H1 (cell line): ENCODE measurements at regions of chr3 and their contacts with region 1.

Region 1: GRCh38 chr3:172461530-172462138 is 13.4 kb upstream of the GHSR start:
- DNase-seq: no peak
- H3K4me3 ChIP-seq: no peak overlapping the region
- H3K27ac ChIP-seq: no peak overlapping the region
- H3K4me1 ChIP-seq: no peaks in the 10 kb centered on the region
- H3K27me3 ChIP-seq: no peaks in the 10 kb centered on the region
- CTCF ChIP-seq: peak in 2 of 3 experiments; percentile 50 to 80; a peak in 2 of 4 replicates
- EP300 ChIP-seq: no peak
- POLR2A ChIP-seq: no peak
- RAD21 ChIP-seq: peak; percentile 48 to 51

Region 2: GRCh38 chr3:172449466-172450149 is 12.0 kb before region 1 on chr3:
- CTCF ChIA-PET with region 1: interaction called, 18 read pairs
- POLR2A ChIA-PET with region 1: interaction called, 3 read pairs
- DNase-seq: peak in 1 of 2 experiments; percentile 84
- H3K4me3 ChIP-seq: peak overlapping the region; percentile 4 to 56 (median 19); a peak in 6 of 8 replicates
- H3K27ac ChIP-seq: no peak overlapping the region
- H3K4me1 ChIP-seq: peaks cover 0 to 23% (median 9%) of the 10 kb centered on the region in 4 experiments; a peak in 5 of 7 replicates
- H3K27me3 ChIP-seq: peaks cover 28 to 54% (median 41%) of the 10 kb centered on the region in 4 experiments
- CTCF ChIP-seq: peak; percentile 7 to 20 (median 10); a peak in 3 of 4 replicates
- EP300 ChIP-seq: no peak
- POLR2A ChIP-seq: no peak
- RAD21 ChIP-seq: 0 out of 4 replicates have a peak, but pooled peaks have one; percentile 4 to 15

Region 3: DNA sequence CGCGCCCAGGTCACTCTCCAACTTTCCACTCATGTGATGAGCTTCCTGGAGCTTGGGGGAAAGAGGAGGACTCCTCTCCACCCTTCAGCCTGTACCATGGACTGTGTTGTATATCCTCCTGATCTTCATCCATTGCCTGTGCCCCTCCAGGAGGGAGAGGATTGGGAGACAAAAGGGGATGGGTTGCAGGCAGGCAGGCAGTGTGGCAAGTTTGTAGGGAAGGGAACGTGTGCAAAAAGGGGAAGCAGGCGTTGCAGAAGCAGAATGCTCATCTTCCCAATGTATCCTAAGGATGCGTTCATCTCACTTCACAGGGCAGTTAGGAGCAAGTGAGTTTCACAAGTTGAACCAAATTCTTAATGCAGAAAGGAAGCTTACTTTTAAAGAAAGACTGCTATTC is 14.7 kb after region 1 on chr3:
- CTCF ChIA-PET with region 1: interaction called, 11 read pairs
- POLR2A ChIA-PET with region 1: no interaction called
- DNase-seq: no peak
- H3K4me3 ChIP-seq: no peak overlapping the region
- H3K27ac ChIP-seq: no peak overlapping the region
- H3K4me1 ChIP-seq: no peaks in the 10 kb centered on the region
- H3K27me3 ChIP-seq: no peaks in the 10 kb centered on the region
- CTCF ChIP-seq: no peak
- EP300 ChIP-seq: no peak
- POLR2A ChIP-seq: no peak
- RAD21 ChIP-seq: no peak

Region 4: DNA sequence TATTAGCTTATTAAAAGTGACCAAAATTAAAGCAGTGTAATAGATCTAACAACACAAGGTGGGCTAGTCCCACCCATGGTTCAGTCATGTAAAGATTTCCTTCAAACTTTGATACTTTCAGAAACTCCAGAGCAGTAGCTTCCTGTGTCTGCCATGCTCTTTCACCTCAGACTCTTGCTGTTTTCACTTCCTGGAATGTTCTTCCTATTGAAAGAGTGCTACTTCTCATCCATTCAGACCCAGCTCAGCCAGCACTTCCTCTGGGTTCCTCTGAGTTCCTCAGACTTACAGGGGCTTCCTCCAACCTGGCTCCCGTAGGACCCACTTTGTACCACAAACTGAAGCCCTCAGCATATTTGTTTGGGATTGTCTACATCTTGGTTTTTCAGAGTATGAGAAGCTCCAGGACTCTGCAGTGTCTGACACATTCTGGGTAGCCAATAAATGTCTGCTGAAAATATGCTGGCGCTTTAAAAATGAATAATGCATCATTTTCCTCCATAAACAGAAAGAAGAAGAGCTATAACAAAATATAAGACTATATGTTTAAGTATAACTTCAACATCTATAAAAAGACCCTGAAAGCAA is 231.2 kb after region 1 on chr3:
- CTCF ChIA-PET with region 1: no interaction called
- POLR2A ChIA-PET with region 1: no interaction called
- DNase-seq: no peak
- H3K4me3 ChIP-seq: no peak overlapping the region
- H3K27ac ChIP-seq: no peak overlapping the region
- H3K4me1 ChIP-seq: peaks cover 0 to 10% (median under 1%) of the 10 kb centered on the region in 4 experiments; a peak in 2 of 7 replicates
- H3K27me3 ChIP-seq: no peaks in the 10 kb centered on the region
- CTCF ChIP-seq: no peak
- EP300 ChIP-seq: no peak
- POLR2A ChIP-seq: no peak
- RAD21 ChIP-seq: no peak